ENCODE measurements at regions of chrX and their contacts with region 1.

Region 1: DNA sequence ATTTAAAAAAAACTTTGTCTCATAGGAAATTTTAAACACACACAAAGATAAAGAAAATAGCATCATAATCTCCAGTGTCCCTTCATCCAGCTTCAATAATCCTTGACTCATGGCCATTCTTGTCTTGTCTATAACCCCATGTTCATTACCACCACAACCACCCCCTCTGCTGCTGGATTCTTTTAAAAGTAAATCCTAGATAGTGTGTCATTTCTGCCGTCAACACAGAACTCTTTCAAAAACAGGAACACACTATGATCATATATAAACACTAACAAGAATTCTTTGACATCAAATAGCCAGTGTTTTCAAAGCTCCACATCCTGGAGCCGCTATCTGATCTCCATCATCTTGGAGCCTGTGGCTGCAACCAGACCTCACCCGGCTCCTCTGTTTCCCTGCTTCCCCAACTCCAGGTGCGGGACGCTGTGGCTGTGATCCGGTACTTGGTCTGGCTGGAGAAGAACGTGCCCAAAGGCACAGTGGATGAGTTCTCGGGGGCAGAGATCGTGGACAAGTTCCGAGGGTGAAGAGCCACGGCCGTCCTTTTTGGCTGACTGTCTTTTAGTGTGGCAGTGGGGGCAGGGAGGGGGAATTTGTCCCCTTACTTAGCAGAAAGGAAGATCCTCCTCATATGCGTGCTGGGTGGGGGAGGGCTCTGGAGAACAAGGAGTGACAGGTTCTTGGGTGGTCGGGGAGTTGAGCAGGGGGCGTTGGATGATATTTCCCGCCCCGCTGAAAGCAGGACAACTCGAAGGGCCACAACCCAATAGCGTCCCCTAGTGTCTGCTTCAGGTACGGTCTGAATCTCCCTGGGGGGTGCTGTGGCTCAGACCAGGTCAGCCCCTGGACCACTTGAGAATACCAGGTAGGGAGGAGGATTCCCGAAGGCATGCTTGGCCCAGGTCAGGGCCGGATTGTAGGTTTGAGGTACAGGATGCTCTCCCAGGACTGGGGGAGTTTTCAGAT is 15.6 kb downstream of the XPNPEP2 start:
- DNase-seq: no peak
- ATAC-seq: no peak
- H3K4me3 ChIP-seq: no peak overlapping the region
- H3K27ac ChIP-seq: no peak overlapping the region
- H3K4me1 ChIP-seq: peaks cover 2% of the 10 kb centered on the region; the same call in 1 of the 2 replicates
- H3K27me3 ChIP-seq: no peaks in the 10 kb centered on the region
- CTCF ChIP-seq: peak; percentile 75

Region 2: GRCh38 chrX:129717892-129718291 is 36.4 kb before region 1 on chrX:
- CTCF ChIA-PET with region 1: no interaction called
- POLR2A ChIA-PET with region 1: no interaction called
- in situ Hi-C with region 1: no loop called
- intact Hi-C with region 1: no loop called
- DNase-seq: no peak
- ATAC-seq: no peak
- H3K4me3 ChIP-seq: no peak overlapping the region
- H3K27ac ChIP-seq: no peak overlapping the region
- H3K4me1 ChIP-seq: no peaks in the 10 kb centered on the region
- H3K27me3 ChIP-seq: no peaks in the 10 kb centered on the region
- CTCF ChIP-seq: no peak

Region 3: GRCh38 chrX:130224518-130225209 is 470.3 kb after region 1 on chrX:
- CTCF ChIA-PET with region 1: no interaction called
- POLR2A ChIA-PET with region 1: interaction called, 21 read pairs
- in situ Hi-C with region 1: no loop called
- intact Hi-C with region 1: no loop called
- DNase-seq: no peak
- ATAC-seq: no peak
- H3K4me3 ChIP-seq: no peak overlapping the region
- H3K27ac ChIP-seq: no peak overlapping the region
- H3K4me1 ChIP-seq: no peaks in the 10 kb centered on the region
- H3K27me3 ChIP-seq: no peaks in the 10 kb centered on the region
- CTCF ChIP-seq: no peak